Mammary epithelial cell (primary cell): ENCODE measurements at regions of chr9 and their contacts with region 1.

Region 1: DNA sequence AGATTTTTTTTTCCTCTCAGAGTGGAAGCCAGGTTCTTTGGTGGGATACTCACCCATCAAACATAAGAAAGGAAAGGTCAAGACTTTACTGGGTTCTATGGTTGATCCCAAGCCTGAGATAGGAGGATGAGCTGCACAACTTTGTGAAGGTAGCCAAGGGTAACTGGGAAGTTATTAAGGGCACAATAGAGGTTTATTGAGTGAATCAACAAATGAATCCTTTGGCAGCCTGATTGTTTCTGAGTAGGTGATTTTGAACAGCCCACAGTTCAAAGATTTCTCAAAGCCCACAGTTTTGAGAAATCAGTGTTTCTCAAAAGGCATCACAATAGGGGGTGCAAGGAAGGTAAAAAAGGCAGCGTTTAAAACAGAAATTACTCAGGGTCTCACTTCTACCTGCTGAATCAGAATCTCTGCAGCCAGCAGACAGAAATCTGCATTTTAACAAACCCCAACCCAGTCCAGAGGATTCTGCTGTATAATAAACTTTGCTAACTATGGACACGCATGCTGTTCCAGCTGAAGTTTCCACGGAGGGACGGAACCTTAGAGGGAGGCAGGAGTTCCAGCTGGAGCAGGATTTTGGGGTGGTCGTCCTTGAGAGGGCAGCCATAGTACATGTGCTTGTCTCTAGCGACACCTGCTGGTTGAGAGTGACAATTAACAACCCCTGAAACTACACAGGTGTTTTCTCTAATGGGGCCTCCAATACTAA is 32.7 kb upstream of the FSD1L start:
- DNase-seq: peak; percentile 22
- H3K4me3 ChIP-seq: no peak overlapping the region
- H3K27ac ChIP-seq: no peak overlapping the region
- H3K4me1 ChIP-seq: no peaks in the 10 kb centered on the region
- H3K27me3 ChIP-seq: no peaks in the 10 kb centered on the region
- CTCF ChIP-seq: peak; percentile 71 to 86

Region 2: GRCh38 chr9:105191508-105192121 is 223.5 kb before region 1 on chr9:
- CTCF ChIA-PET with region 1: no interaction called
- dilution Hi-C with region 1: no loop called
- in situ Hi-C with region 1: no loop called
- intact Hi-C with region 1: loop called (anchors 1 kb)
- DNase-seq: no peak
- H3K4me3 ChIP-seq: no peak overlapping the region
- H3K27ac ChIP-seq: no peak overlapping the region
- H3K4me1 ChIP-seq: no peaks in the 10 kb centered on the region
- H3K27me3 ChIP-seq: no peaks in the 10 kb centered on the region
- CTCF ChIP-seq: no peak

Region 3: DNA sequence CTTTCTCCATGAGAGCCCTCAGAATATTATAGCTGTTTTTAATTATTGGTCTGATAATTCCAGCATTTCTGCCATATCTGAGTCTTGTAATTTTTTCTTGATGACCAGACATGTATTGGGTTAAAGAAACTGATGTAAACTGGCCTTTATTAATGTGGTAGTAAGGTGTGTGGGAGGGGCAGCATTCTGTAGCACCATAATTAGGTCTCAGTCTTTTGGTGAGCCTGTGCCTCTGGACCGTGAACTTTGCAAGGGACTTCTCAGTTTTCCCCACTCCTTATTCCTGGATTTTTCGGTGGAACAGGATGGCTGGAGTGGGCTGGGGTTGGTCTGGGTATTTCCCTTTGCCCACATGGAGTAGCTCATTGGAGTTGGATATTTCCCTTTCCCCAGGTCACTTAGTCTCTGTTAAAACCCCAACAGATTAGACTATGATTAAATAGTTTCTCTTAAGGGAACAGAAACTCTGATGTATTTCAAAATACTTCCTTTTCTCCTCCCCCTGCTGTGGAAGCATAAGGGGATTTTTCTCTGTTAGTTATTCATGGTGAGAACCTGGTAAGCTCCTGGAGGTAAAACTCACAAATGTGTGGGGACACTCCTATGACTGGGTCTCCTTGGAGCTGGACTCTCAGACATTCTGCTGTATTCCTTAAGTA is 85.1 kb after region 1 on chr9:
- CTCF ChIA-PET with region 1: no interaction called
- dilution Hi-C with region 1: no loop called
- in situ Hi-C with region 1: no loop called
- intact Hi-C with region 1: no loop called
- DNase-seq: peak; percentile 65
- H3K4me3 ChIP-seq: no peak overlapping the region
- H3K27ac ChIP-seq: no peak overlapping the region
- H3K4me1 ChIP-seq: peaks cover 3% of the 10 kb centered on the region
- H3K27me3 ChIP-seq: no peaks in the 10 kb centered on the region
- CTCF ChIP-seq: no peak